ENCODE measurements at regions of chr11 and their contacts with region 1.

Region 1: DNA sequence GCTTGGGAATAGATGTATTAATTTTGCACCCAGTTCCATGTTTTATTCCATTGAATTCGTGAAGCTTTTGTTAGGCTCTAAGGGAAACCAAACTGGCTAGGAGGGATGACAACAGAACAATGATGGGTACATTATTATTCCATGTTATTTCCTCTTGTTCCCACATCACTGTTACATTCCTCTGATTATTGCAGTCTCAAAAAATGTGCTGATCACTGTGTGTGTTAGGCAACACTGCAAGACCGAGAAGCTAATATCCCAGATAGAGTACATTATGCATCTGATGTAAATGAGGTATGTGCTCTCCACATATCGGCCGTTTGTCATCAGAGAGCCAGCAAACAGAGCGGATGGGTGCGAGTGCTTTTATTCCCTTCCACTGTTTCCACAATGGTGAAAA is 327.9 kb downstream of the SOX6 start:
- DNase-seq: peak; percentile 29
- H3K4me3 ChIP-seq: no peak overlapping the region
- H3K27ac ChIP-seq: no peak overlapping the region
- H3K4me1 ChIP-seq: peaks cover 23% of the 10 kb centered on the region
- H3K27me3 ChIP-seq: no peaks in the 10 kb centered on the region
- CTCF ChIP-seq: no peak

Region 2: GRCh38 chr11:15650105-15650938 is 378.1 kb before region 1 on chr11:
- CTCF ChIA-PET with region 1: no interaction called
- POLR2A ChIA-PET with region 1: no interaction called
- intact Hi-C with region 1: loop called (anchors 10 kb)
- DNase-seq: peak; percentile 92
- H3K4me3 ChIP-seq: peak overlapping the region; percentile 45
- H3K27ac ChIP-seq: peak overlapping the region; percentile 75
- H3K4me1 ChIP-seq: peaks cover 7% of the 10 kb centered on the region
- H3K27me3 ChIP-seq: no peaks in the 10 kb centered on the region
- CTCF ChIP-seq: peak; percentile 93

Region 3: DNA sequence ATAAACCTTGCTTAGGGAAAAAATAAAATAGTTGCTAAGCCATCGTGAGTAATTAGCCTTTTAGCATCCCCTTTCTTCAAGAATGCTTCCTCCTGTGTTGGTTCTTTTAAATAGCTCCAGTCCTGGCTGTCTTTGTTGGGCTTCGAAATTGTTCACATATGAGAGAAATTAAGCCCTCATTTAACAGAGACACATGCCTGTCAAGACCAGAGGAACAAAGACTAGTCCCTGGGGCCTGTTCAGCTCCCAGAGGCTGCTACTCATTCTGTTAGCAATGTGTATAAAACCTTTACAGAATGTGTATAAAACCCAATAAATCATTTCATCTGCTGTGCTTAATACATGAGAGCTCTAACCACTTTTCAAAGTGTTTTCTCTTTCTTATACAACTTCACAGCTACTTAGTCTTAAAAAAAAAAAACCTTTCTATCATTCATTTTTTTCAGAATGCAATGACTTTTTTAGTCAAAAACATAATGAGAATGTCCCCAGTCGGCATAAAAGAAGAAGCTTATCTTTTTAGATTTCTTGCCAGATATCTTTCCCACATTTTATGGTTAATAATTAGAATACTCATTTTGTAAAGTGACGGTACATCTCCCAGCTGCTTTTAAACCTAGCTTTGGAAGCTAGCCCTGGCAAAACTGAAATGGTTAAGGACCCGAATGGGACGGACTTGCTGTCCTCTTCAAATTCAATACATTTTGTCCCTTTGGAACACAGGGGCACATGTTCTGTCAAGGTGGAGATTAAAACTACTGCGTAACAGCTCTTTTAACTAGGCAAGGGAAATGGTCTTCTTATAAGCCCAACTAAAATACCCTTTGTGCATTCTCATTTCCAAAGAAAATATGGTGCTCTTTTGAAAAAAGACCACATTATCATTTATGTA is 141.8 kb after region 1 on chr11:
- CTCF ChIA-PET with region 1: no interaction called
- POLR2A ChIA-PET with region 1: no interaction called
- intact Hi-C with region 1: loop called (anchors 10 kb)
- DNase-seq: peak; percentile 95
- H3K4me3 ChIP-seq: no peak overlapping the region
- H3K27ac ChIP-seq: peak overlapping the region; percentile 62
- H3K4me1 ChIP-seq: peaks cover 50% of the 10 kb centered on the region
- H3K27me3 ChIP-seq: no peaks in the 10 kb centered on the region
- CTCF ChIP-seq: no peak